Activated T-helper 1 cell treated with anti-CD3 and anti-CD28 coated beads, Interleukin-12 subunit alpha, Interleukin-12 subunit beta, Interleukin-2, Interleukin-4 antibody, amounts not matched to agents 30 ng/mL and 10 ng/mL and 1 ng/mL, durations not matched to agents 14 hours and 24 hours and 36 hours (primary cell): ENCODE measurements at regions of chr6 and their contacts with region 1.

Region 1: DNA sequence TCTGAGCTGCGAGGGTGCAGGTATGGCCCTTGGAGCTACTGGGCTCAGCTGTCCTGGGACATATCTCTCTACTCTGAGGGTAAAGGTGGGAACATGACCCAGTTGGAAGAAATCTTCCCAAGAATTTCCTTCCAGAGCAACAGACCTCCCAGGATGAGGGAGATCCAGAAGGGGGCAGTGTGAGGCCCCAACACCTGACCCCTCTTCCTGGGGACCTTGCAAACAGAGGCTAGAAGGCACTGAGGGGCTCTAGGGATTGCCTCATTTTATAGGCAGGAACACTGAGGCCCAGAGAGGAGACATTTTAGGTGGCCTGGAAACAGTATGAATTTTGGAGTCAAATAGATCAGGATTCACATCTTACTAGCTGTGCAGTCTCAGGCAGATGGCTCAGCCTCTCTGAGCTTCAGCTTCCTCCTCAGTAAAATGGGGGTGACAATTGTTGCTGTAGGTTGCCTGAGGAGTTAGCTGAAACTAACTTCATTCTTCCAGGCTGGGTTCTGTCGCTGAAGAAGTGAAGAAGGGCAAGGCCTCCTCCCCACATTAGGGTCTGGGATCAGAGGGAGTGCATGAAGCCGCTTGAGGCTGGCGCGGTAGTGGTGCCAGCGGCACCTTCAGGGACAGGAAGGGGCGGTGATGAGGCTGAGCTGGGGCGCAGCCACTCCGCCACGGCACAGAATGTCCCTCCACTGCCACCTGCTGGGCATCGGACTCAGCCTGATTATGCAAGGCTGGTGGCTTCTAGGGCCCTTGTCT is 11.4 kb downstream of the KCNK17 start:
- DNase-seq: peak; percentile 76
- H3K4me3 Mint-ChIP-seq: peak overlapping the region; percentile 66
- H3K27ac Mint-ChIP-seq: no peak overlapping the region
- H3K4me1 Mint-ChIP-seq: peaks cover 13% of the 10 kb centered on the region
- H3K27me3 Mint-ChIP-seq: peaks cover 1% of the 10 kb centered on the region

Region 2: DNA sequence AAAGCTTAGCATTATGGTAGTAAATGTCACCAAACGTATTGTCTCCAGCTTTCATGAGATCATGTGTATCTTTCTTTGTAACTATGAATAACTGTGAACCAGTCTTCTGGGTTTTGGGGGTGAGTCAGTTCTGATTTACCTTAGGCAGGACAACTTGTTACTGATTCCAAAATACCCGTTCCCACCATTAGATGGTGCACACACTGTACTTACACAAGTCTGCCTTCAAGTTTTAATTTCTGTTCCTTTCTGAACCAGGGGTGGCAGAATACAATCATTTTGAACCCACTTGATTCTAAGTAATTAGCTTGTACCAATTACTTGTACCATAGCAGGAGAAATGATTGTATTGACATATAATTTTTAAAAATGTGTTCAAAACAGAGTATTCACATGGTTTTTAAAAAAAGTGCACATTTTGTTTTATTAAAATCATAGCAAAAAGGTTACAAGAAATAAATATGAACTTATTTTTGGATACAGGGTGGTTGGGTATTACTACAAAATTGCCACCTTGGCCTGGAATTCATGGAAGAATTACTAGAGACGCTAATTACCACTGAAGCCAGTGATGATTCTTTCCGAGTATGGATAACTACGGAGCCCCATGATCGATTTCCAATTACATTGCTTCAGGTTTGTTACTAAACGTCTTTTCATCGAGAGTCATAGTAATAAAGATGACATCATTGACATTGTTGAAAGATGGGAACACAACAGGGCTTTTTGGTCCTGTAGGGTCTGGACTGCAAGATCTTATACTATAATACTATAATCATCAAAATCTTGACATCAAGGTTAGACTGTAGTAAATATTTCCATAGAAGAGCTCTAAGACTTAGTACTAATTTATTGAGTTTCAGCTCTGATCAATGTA is 329.4 kb before region 1 on chr6:
- intact Hi-C with region 1: loop called (anchors 1 kb)
- DNase-seq: no peak
- H3K4me3 Mint-ChIP-seq: no peak overlapping the region
- H3K27ac Mint-ChIP-seq: no peak overlapping the region
- H3K4me1 Mint-ChIP-seq: no peaks in the 10 kb centered on the region
- H3K27me3 Mint-ChIP-seq: peaks cover 18% of the 10 kb centered on the region

Region 3: GRCh38 chr6:38997128-38997761 is 305.6 kb before region 1 on chr6:
- intact Hi-C with region 1: loop called (anchors 2 kb)
- DNase-seq: no peak
- H3K4me3 Mint-ChIP-seq: no peak overlapping the region
- H3K27ac Mint-ChIP-seq: no peak overlapping the region
- H3K4me1 Mint-ChIP-seq: no peaks in the 10 kb centered on the region
- H3K27me3 Mint-ChIP-seq: peaks cover 20% of the 10 kb centered on the region

Region 4: DNA sequence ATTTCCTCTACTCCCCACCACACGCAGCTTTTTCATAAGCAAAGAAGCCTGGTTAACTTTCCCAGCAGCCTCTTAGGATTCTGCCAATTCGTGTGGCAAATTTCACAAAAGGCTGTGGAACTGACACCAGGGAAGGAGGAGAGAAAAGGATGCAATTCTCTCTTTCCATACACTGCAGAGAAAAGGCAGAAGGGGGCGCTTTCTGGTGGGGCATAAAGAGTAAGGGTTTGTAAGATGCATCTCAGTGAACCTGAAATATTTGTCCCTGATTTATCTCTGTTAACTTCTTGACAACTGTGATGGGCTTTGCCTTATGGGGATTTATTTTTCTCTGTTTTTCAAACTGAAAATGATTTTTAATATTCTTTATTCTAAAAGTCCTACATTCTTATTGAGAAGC is 299.8 kb before region 1 on chr6:
- intact Hi-C with region 1: loop called (anchors 1 kb)
- DNase-seq: no peak
- H3K4me3 Mint-ChIP-seq: no peak overlapping the region
- H3K27ac Mint-ChIP-seq: no peak overlapping the region
- H3K4me1 Mint-ChIP-seq: no peaks in the 10 kb centered on the region
- H3K27me3 Mint-ChIP-seq: peaks cover 41% of the 10 kb centered on the region

Region 5: DNA sequence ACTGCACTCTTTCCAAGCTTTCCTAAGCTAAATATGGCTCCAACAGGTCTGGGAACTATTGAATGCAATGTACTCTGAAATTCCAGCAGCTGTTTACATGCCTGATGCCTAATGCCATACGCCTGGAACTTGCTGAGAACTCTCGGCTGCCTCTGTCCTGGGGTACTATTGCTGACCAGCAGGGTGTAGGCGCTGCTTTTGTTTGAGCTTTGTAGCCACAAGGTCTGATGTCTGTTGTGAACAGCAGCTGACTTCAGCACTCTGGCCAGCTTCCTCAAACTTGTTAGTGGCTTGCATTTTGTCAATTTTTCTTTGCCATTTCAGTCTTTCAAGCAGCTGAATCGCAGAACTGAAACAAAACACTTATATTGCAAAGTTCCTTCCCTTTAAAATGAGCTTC is 214.5 kb before region 1 on chr6:
- intact Hi-C with region 1: loop called (anchors 1 kb)
- DNase-seq: no peak
- H3K4me3 Mint-ChIP-seq: no peak overlapping the region
- H3K27ac Mint-ChIP-seq: no peak overlapping the region
- H3K4me1 Mint-ChIP-seq: peaks cover 24% of the 10 kb centered on the region
- H3K27me3 Mint-ChIP-seq: peaks cover 55% of the 10 kb centered on the region

Region 6: DNA sequence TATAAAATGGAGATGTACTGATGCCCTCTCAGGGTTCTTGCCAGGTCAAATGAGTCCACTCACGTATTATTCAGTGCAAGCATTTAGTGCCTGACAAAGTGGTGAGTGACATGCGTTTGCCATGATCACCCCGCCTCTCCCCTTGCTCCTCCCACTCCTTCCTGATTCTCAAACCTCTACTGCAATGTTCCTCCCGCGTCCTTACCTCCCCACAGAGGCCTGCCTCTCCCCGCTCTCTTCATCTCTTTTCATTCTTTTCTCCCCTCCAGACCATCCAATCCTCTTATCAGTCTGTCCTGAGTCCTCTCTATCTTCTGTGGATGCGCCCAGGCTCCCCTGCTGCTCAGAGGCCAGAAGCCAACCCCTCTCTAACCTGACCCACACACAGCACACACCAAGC is 114.3 kb before region 1 on chr6:
- intact Hi-C with region 1: loop called (anchors 1 kb)
- DNase-seq: no peak
- H3K4me3 Mint-ChIP-seq: peak overlapping the region; percentile 45
- H3K27ac Mint-ChIP-seq: peak overlapping the region; percentile 27
- H3K4me1 Mint-ChIP-seq: peaks cover 27% of the 10 kb centered on the region
- H3K27me3 Mint-ChIP-seq: no peaks in the 10 kb centered on the region

Region 7: DNA sequence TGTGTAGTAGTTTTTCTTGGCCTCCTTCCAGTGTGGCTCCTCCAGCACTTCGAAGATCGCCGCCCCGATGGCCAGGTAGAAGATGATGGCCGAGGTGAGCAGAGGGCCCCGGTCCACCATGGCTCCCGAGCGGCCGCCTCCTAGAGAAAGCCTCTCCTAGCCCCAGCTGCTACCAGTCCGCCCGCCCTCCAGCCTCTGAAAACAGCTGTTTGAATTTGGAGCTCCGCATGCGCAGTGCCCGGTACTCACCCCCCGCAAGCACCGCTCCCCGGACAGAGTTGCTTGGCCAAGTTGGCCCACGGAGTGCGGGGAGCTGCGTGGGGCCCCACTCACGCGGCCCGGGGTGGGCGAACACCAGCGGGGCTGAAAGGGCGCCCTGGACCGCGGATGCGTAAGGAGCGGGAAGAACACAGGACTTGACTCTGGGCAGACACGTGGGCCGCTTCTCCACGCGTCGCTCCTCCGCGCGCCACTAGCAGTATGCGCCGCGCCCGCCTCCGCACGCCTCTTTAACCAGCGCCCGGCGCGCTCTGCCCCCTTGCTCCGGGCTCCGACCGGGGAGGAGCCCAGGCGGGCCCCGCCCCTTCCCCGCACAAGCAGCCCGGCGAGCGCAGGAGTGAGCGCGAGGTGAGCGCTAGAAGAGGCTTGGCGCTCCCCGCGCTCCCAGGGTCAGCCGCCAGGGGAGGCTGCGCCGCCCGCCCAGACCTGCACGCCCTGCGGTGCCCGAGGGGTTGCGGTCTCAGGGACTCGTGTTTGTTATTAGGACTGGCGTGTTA is 73.7 kb before region 1 on chr6 and contains the start of gene KCNK5:
- intact Hi-C with region 1: loop called (anchors 1 kb)
- DNase-seq: peak; percentile 86
- H3K4me3 Mint-ChIP-seq: peak within 1 kb of the TSS; percentile 88
- H3K27ac Mint-ChIP-seq: peak within 1 kb of the TSS; percentile 94
- H3K4me1 Mint-ChIP-seq: peaks cover 54% of the 10 kb centered on the region
- H3K27me3 Mint-ChIP-seq: no peaks in the 10 kb centered on the region
- total RNA-seq, gene KCNK5: 36.7 and 38.7 TPM in 2 replicates